CD8-positive, alpha-beta T cell (primary cell): ENCODE measurements at regions of chr7 and their contacts with region 1.

Region 1: DNA sequence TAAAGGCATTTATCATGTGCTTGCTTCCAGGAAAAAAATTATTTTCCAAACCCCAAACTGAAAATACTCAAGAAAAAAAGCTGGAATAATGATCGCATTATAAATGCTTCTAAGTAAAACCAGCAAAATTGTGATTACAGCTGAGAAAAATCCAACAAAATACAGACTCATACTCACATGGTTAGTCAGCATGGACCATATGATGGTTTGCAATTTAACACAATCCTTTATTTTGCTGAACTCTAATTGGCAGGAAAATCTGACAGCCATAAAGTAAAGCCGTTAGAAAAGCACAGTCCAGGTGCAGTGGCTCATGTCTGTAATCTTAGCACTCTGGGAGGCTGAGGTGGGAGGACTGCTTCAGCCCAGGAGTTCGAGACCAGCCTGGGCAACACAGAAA is 59.6 kb downstream of the BRI3 start:
- DNase-seq: no peak
- ATAC-seq: no peak
- H3K4me3 ChIP-seq: no peak overlapping the region
- H3K4me3 Mint-ChIP-seq: no peak overlapping the region
- H3K27ac ChIP-seq: no peak overlapping the region
- H3K27ac Mint-ChIP-seq: no peak overlapping the region
- H3K4me1 ChIP-seq: no peaks in the 10 kb centered on the region
- H3K4me1 Mint-ChIP-seq: no peaks in the 10 kb centered on the region
- H3K27me3 ChIP-seq: no peaks in the 10 kb centered on the region
- H3K27me3 Mint-ChIP-seq: peaks cover 2% of the 10 kb centered on the region
- CTCF ChIP-seq: no peak

Region 2: GRCh38 chr7:98315341-98315983 is 25.6 kb before region 1 on chr7:
- CTCF ChIA-PET with region 1: no interaction called
- POLR2A ChIA-PET with region 1: no interaction called
- intact Hi-C with region 1: loop called in 1 of 2 experiments (anchors 1 kb)
- DNase-seq: no peak
- ATAC-seq: no peak
- H3K4me3 ChIP-seq: no peak overlapping the region
- H3K4me3 Mint-ChIP-seq: no peak overlapping the region
- H3K27ac ChIP-seq: no peak overlapping the region
- H3K27ac Mint-ChIP-seq: no peak overlapping the region
- H3K4me1 ChIP-seq: no peaks in the 10 kb centered on the region
- H3K4me1 Mint-ChIP-seq: no peaks in the 10 kb centered on the region
- H3K27me3 ChIP-seq: no peaks in the 10 kb centered on the region
- H3K27me3 Mint-ChIP-seq: peaks cover 4% of the 10 kb centered on the region
- CTCF ChIP-seq: no peak